Naive thymus-derived CD4-positive, alpha-beta T cell (primary cell): ENCODE measurements at regions of chr7 and their contacts with region 1.

Region 1: GRCh38 chr7:128530855-128531104 is 54.2 kb downstream of the METTL2B start:
- DNase-seq: no peak
- ATAC-seq: no peak
- H3K4me3 ChIP-seq: peak overlapping the region; percentile 46
- H3K4me3 Mint-ChIP-seq: peak overlapping the region in 1 of 10 donors; percentile 16
- H3K27ac ChIP-seq: peak overlapping the region; percentile 95
- H3K27ac Mint-ChIP-seq: no peak overlapping the region
- H3K4me1 ChIP-seq: peaks cover 0 to 4% of the 10 kb centered on the region in 2 donors
- H3K4me1 Mint-ChIP-seq: peaks cover 23 to 42% (median 40%) of the 10 kb centered on the region in 7 donors
- H3K27me3 ChIP-seq: no peaks in the 10 kb centered on the region
- H3K27me3 Mint-ChIP-seq: no peaks in the 10 kb centered on the region

Region 2: GRCh38 chr7:128409596-128410160 is 121.1 kb before region 1 on chr7 and contains the start of gene IMPDH1:
- CTCF ChIA-PET with region 1: no interaction called
- POLR2A ChIA-PET with region 1: no interaction called
- intact Hi-C with region 1: loop called in 1 of 2 experiments (anchors 10 kb)
- DNase-seq: peak; percentile 73 to 95 (median 83)
- ATAC-seq: peak; percentile 87
- H3K4me3 ChIP-seq: peak within 1 kb of the TSS; percentile 89
- H3K4me3 Mint-ChIP-seq: peak within 1 kb of the TSS; percentile 88 to 95 (median 92)
- H3K27ac ChIP-seq: peak within 1 kb of the TSS; percentile 81
- H3K27ac Mint-ChIP-seq: peak within 1 kb of the TSS; percentile 87 to 93 (median 90)
- H3K4me1 ChIP-seq: peaks cover 15 to 27% of the 10 kb centered on the region in 2 donors
- H3K4me1 Mint-ChIP-seq: peaks cover 12 to 41% (median 38%) of the 10 kb centered on the region in 7 donors
- H3K27me3 ChIP-seq: no peaks in the 10 kb centered on the region
- H3K27me3 Mint-ChIP-seq: peaks cover 0 to 26% (median 0%) of the 10 kb centered on the region in 5 donors
- total RNA-seq, gene IMPDH1: 36.5 to 92.0 (median 44.4) TPM

Region 3: GRCh38 chr7:128455551-128456254 is 75.1 kb before region 1 on chr7 and contains the start of gene HILPDA:
- CTCF ChIA-PET with region 1: no interaction called
- POLR2A ChIA-PET with region 1: no interaction called
- intact Hi-C with region 1: loop called (anchors 1 to 5 kb)
- DNase-seq: peak; percentile 90 to 98 (median 93)
- ATAC-seq: peak; percentile 95
- H3K4me3 ChIP-seq: peak within 1 kb of the TSS; percentile 85
- H3K4me3 Mint-ChIP-seq: peak within 1 kb of the TSS; percentile 81 to 96 (median 92)
- H3K27ac ChIP-seq: peak within 1 kb of the TSS; percentile 83
- H3K27ac Mint-ChIP-seq: peak within 1 kb of the TSS; percentile 72 to 98 (median 89)
- H3K4me1 ChIP-seq: peaks cover 12 to 22% of the 10 kb centered on the region in 2 donors
- H3K4me1 Mint-ChIP-seq: peaks cover 13 to 65% (median 22%) of the 10 kb centered on the region in 7 donors
- H3K27me3 ChIP-seq: no peaks in the 10 kb centered on the region
- H3K27me3 Mint-ChIP-seq: peaks cover 0 to 8% (median 0%) of the 10 kb centered on the region in 5 donors
- total RNA-seq, gene HILPDA: 2.4 to 39.5 (median 4.4) TPM

Region 4: GRCh38 chr7:128672912-128673517 is 142.2 kb after region 1 on chr7:
- CTCF ChIA-PET with region 1: no interaction called
- POLR2A ChIA-PET with region 1: no interaction called
- intact Hi-C with region 1: no loop called
- DNase-seq: peak in 2 of 9 donors; percentile 11 to 20
- ATAC-seq: peak; percentile 47
- H3K4me3 ChIP-seq: no peak overlapping the region
- H3K4me3 Mint-ChIP-seq: peak overlapping the region in 1 of 10 donors; percentile 23
- H3K27ac ChIP-seq: no peak overlapping the region
- H3K27ac Mint-ChIP-seq: peak overlapping the region in 2 of 9 donors; percentile 20 to 26
- H3K4me1 ChIP-seq: peaks cover 0 to 3% of the 10 kb centered on the region in 2 donors
- H3K4me1 Mint-ChIP-seq: peaks cover 4 to 16% (median 9%) of the 10 kb centered on the region in 7 donors
- H3K27me3 ChIP-seq: peaks cover 0 to 4% of the 10 kb centered on the region in 2 donors
- H3K27me3 Mint-ChIP-seq: peaks cover 0 to 18% (median 8%) of the 10 kb centered on the region in 5 donors